ENCODE measurements at regions of chr12 and their contacts with region 1.

Region 1: GRCh38 chr12:21501379-21501956 is at the starts of genes GOLT1B and RECQL:
- DNase-seq: peak; percentile 99
- H3K4me3 Mint-ChIP-seq: no peak within 1 kb of the TSS
- H3K27ac Mint-ChIP-seq: no peak within 1 kb of the TSS
- H3K4me1 Mint-ChIP-seq: peaks cover 13% of the 10 kb centered on the region
- H3K27me3 Mint-ChIP-seq: no peaks in the 10 kb centered on the region
- CTCF ChIP-seq: no peak
- total RNA-seq, gene GOLT1B: 58.6 and 80.7 TPM in 2 replicates
- total RNA-seq, gene RECQL: 44.9 and 49.5 TPM in 2 replicates

Region 2: GRCh38 chr12:21438643-21439042 is 62.8 kb before region 1 on chr12:
- CTCF ChIA-PET with region 1: no interaction called
- POLR2A ChIA-PET with region 1: interaction called, 10 read pairs
- intact Hi-C with region 1: no loop called
- DNase-seq: no peak
- H3K4me3 Mint-ChIP-seq: peak overlapping the region; percentile 76
- H3K27ac Mint-ChIP-seq: peak overlapping the region; percentile 96
- H3K4me1 Mint-ChIP-seq: peaks cover 21% of the 10 kb centered on the region
- H3K27me3 Mint-ChIP-seq: peaks cover 27% of the 10 kb centered on the region
- CTCF ChIP-seq: no peak

Region 3: DNA sequence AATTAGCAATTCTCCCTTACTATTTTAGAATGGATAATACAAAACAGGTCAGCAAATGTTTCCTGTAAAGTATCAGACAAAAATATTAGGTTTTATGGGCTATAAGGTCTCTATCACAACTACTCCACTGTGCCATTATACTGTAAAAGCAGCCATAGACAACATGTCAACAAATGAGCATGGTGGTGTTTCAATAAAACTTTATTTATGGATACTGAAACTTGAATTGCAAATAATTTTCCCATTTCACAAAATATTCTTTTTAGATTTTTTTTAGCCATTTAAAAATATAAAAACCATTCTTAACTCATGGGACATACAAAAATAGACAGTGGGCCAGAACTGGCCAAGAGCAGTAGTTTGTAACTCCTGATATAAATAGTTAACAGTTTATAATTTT is 15.5 kb before region 1 on chr12:
- CTCF ChIA-PET with region 1: interaction called, 4 read pairs
- POLR2A ChIA-PET with region 1: interaction called, 13 read pairs
- intact Hi-C with region 1: no loop called
- DNase-seq: no peak
- H3K4me3 Mint-ChIP-seq: no peak overlapping the region
- H3K27ac Mint-ChIP-seq: no peak overlapping the region
- H3K4me1 Mint-ChIP-seq: no peaks in the 10 kb centered on the region
- H3K27me3 Mint-ChIP-seq: no peaks in the 10 kb centered on the region
- CTCF ChIP-seq: no peak

Region 4: DNA sequence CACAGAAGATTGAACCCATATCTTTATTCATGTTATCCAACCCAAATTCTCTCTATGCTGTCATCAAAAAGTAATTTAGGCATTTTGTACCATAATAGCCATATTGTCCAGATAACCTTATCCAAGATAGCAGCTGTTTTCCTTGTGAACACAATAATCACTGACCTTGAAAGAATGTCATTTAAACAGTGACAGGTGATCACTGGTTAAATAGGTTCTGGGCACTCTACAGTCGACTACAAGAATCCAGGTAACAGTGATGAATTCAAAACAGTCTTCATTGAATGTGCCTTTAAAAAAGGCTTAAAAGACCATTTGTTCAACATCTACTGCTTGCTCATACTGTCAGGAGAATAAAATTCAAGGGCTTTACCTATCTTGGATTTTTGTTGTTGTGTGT is 20.1 kb after region 1 on chr12:
- CTCF ChIA-PET with region 1: interaction called, 4 read pairs
- POLR2A ChIA-PET with region 1: interaction called, 30 read pairs
- intact Hi-C with region 1: loop called (anchors 2 kb)
- DNase-seq: no peak
- H3K4me3 Mint-ChIP-seq: no peak overlapping the region
- H3K27ac Mint-ChIP-seq: peak overlapping the region; percentile 62
- H3K4me1 Mint-ChIP-seq: peaks cover 10% of the 10 kb centered on the region
- H3K27me3 Mint-ChIP-seq: no peaks in the 10 kb centered on the region
- CTCF ChIP-seq: no peak

Region 5: DNA sequence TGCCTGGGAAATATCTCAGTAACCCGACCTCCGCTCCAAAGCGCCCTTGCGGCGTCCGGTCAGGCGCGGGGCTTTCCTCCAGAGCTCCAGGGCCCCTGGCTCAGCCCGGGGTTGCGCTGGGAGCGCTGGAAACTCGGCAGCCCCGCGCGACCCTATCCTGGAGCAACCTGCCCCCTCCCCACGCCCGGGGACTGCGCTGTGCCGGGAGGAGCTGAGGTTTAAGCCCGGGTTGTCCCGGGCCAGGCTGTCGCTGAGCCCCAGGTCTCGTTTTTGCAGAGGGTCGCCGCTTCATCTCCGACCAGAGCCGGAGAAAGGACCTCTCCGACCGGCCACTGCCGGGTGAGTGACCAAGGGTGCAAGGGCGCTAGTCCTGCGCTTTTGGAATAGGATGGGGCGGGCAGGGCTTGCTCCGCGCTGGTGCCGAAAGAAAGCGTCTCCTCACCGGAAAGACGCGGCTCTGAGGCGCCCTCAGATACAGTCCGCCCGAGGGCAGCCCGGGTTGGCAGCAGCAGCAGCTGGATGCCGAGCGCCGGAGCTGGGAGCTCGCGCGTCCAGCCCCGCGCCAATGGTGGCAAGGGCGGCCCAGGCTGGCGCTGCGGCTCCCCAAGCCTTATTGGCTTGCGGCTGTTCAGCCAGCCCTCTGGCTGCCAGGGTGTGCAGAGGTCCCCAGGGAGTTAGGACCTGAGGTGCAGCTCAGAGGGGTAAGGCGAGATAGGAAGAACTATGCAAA is 26.1 kb after region 1 on chr12:
- CTCF ChIA-PET with region 1: interaction called, 4 read pairs
- POLR2A ChIA-PET with region 1: interaction called, 30 read pairs
- intact Hi-C with region 1: loop called (anchors 2 kb)
- DNase-seq: peak; percentile 69
- H3K4me3 Mint-ChIP-seq: peak overlapping the region; percentile 82
- H3K27ac Mint-ChIP-seq: peak overlapping the region; percentile 65
- H3K4me1 Mint-ChIP-seq: peaks cover 26% of the 10 kb centered on the region
- H3K27me3 Mint-ChIP-seq: no peaks in the 10 kb centered on the region
- CTCF ChIP-seq: no peak

Region 6: DNA sequence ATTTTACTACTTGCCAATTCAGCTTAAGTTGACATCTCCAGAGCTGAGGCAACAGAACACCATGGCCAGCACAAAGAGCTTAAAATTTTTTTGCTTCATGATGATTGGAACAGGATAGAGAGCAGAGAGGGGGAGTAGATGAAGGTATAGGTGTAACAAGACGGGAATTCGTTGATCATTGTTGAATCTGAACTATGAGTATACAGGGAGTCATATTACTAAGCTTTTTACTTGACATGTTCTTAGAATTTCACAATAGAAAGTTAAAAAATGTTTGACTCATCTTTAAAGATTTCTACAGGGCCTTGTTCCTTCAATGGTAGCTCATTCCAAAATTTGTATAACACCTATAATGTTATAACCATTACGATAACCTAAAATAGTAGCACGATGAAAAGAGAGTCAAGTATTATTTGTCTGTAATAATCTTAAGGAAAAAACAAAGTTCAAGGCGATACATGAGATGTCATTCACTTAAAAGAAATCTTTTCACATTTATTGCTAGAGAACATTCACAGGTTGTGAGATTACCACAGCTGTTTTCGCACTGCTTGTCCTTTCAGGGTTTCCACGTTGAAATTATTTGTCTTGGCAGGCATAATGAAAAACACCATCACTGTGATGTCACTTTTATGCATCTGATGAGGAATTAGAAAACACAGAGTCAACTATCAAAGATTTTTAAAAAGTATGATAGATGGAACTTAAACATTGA is 58.5 kb after region 1 on chr12:
- CTCF ChIA-PET with region 1: interaction called, 5 read pairs
- POLR2A ChIA-PET with region 1: interaction called, 54 read pairs
- intact Hi-C with region 1: no loop called
- DNase-seq: peak; percentile 89
- H3K4me3 Mint-ChIP-seq: peak overlapping the region; percentile 61
- H3K27ac Mint-ChIP-seq: peak overlapping the region; percentile 97
- H3K4me1 Mint-ChIP-seq: peaks cover 15% of the 10 kb centered on the region
- H3K27me3 Mint-ChIP-seq: no peaks in the 10 kb centered on the region
- CTCF ChIP-seq: no peak

Region 7: GRCh38 chr12:21657326-21658077 is 156.0 kb after region 1 on chr12 and contains the start of gene LDHB:
- CTCF ChIA-PET with region 1: no interaction called
- POLR2A ChIA-PET with region 1: interaction called, 17 read pairs
- intact Hi-C with region 1: loop called (anchors 1 kb)
- DNase-seq: peak; percentile 94
- H3K4me3 Mint-ChIP-seq: peak within 1 kb of the TSS; percentile 89
- H3K27ac Mint-ChIP-seq: peak within 1 kb of the TSS; percentile 86
- H3K4me1 Mint-ChIP-seq: peaks cover 26% of the 10 kb centered on the region
- H3K27me3 Mint-ChIP-seq: no peaks in the 10 kb centered on the region
- CTCF ChIP-seq: no peak
- total RNA-seq, gene LDHB: 715 and 788 TPM in 2 replicates

Region 8: GRCh38 chr12:21891751-21892217 is 390.3 kb after region 1 on chr12:
- CTCF ChIA-PET with region 1: no interaction called
- POLR2A ChIA-PET with region 1: no interaction called
- intact Hi-C with region 1: no loop called
- DNase-seq: no peak
- H3K4me3 Mint-ChIP-seq: no peak overlapping the region
- H3K27ac Mint-ChIP-seq: no peak overlapping the region
- H3K4me1 Mint-ChIP-seq: no peaks in the 10 kb centered on the region
- H3K27me3 Mint-ChIP-seq: no peaks in the 10 kb centered on the region
- CTCF ChIP-seq: no peak

Region 9: DNA sequence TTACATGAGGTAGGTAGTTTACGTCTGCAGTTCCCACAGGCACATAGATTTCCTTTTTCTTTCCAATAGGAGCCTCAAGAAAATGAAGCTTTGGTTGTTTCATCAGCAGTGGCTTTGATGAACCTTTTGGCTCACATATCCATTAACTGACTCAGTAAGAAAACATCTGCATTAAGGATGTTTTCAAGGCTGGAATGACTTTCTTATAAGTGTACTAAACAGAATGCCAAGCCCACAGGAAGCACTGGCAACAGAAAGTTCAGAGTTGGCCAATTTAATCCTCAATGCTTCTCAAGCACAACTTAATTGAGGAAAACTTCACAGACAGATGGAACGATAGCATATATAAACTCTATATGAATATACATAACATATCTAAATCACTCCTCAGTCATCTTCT is 769.6 kb after region 1 on chr12:
- CTCF ChIA-PET with region 1: no interaction called
- POLR2A ChIA-PET with region 1: no interaction called
- intact Hi-C with region 1: no loop called
- DNase-seq: peak; percentile 85
- H3K4me3 Mint-ChIP-seq: no peak overlapping the region
- H3K27ac Mint-ChIP-seq: peak overlapping the region; percentile 71
- H3K4me1 Mint-ChIP-seq: peaks cover 47% of the 10 kb centered on the region
- H3K27me3 Mint-ChIP-seq: no peaks in the 10 kb centered on the region
- CTCF ChIP-seq: no peak